PC-3 (cell line): ENCODE measurements at regions of chr1 and their contacts with region 1.

Region 1: DNA sequence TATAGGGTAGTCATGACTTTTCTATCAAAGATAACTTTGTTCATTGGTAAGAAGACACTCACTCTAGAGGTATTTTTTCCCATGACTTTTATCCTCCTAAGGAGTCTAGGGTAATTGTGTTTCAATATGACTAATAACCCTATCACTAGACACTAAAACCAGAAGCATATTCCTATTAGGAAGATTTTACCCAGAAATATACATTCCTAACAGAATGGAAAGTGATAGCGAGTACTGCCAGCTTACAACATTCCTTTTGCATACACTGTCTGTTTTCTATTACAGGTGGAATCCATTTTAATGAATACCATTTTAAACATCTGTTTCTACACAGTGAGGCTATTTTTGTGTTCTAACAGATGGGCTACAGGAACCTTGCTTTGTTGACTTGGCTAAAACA is 31.4 kb upstream of the C1orf185 start:
- DNase-seq: peak; percentile 91
- ATAC-seq: peak; percentile 90
- H3K4me3 ChIP-seq: peak overlapping the region; percentile 49
- H3K27ac ChIP-seq: peak overlapping the region; percentile 86
- H3K4me1 ChIP-seq: peaks cover 29% of the 10 kb centered on the region
- H3K27me3 ChIP-seq: no peaks in the 10 kb centered on the region
- CTCF ChIP-seq: no peak

Region 2: DNA sequence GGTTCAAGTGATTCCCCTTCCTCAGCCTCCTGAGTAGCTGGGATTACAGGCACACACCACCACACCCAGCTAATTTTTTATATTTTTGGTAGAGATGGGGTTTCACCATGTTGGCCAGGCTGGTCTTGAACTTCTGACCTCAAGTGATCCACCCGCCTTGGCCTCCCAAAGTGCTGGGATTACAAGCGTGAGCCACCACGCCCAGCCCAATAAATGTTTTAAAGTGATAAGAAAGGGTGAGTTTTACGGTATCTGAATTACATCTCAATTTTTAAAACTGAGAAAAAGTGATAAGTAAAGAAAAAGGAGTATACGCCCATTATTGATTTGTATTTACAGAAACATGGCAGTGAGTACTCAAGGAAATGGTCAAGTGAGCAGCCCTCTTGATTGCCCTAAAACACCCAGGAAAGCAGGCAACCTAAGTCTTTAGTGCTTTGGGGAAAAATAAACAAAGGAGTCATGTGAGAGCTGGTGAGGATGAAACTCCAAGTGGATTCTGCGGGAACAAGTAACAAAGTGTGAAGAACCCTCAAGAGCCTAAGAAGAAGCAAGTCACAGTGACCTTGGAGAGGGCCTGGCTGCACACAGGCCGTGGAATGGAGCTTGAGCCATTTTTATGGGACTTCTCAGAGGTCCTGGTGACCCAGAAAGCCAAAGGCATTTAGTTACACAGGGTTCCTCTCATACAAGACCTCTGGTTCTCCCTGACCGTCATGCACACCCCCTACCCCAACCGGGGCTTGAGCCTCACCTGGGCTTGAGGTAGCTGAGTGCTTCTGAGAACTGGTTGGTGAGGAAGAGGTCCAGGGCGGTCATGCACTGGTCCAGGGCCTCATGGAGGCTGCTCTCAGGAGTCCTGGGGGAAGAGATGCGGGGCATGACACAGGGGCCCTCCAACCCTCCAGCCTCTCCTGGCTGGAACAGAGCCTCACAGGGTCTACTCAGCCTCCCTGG is 250.6 kb after region 1 on chr1:
- CTCF ChIA-PET with region 1: no interaction called
- POLR2A ChIA-PET with region 1: interaction called, 17 read pairs
- intact Hi-C with region 1: no loop called
- DNase-seq: no peak
- ATAC-seq: no peak
- H3K4me3 ChIP-seq: no peak overlapping the region
- H3K27ac ChIP-seq: no peak overlapping the region
- H3K4me1 ChIP-seq: no peaks in the 10 kb centered on the region
- H3K27me3 ChIP-seq: no peaks in the 10 kb centered on the region
- CTCF ChIP-seq: no peak

Region 3: GRCh38 chr1:51442616-51443015 is 372.0 kb after region 1 on chr1:
- CTCF ChIA-PET with region 1: no interaction called
- POLR2A ChIA-PET with region 1: no interaction called
- intact Hi-C with region 1: no loop called
- DNase-seq: no peak
- ATAC-seq: no peak
- H3K4me3 ChIP-seq: no peak overlapping the region
- H3K27ac ChIP-seq: no peak overlapping the region
- H3K4me1 ChIP-seq: no peaks in the 10 kb centered on the region
- H3K27me3 ChIP-seq: no peaks in the 10 kb centered on the region
- CTCF ChIP-seq: no peak